ENCODE measurements at regions of chr22 and their contacts with region 1.

Region 1: DNA sequence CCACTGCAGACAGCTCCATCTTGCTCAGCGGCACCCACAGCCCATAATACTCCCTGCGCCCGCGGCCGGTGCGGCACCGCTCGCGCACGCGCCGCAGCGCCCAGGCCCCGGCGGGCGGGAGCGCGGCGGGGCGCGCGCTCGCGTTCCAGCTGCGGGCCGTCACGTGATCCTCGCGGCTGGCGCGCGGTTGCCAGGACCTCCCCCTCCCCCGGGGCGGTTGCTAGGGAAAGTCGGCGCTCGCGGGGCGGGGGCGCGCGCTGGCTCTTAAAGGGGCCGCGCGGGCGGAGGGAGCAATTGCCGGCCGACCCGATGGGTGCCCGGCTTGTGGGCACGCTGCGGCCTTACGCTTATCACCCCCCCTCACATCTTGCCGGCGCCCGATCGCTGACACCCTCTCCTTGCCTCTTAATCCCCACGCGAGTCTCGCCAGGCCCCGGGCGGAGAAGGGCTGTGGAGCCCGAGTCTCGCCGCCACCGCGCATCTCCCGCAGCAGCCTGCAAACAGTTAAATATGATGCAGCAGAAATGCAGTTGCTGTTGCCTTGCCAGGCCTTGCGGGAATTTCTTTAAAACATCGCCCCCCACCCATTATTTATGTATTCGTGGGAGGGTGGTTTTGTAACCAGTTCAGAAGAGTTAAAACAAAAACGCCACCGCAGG is at the start of gene CBX6:
- DNase-seq: peak; percentile 96
- H3K4me3 Mint-ChIP-seq: peak within 1 kb of the TSS; percentile 93
- H3K27ac Mint-ChIP-seq: peak within 1 kb of the TSS; percentile 91
- H3K4me1 Mint-ChIP-seq: peaks cover 53% of the 10 kb centered on the region
- H3K27me3 Mint-ChIP-seq: no peaks in the 10 kb centered on the region
- total RNA-seq, gene CBX6: 116 to 117 TPM

Region 2: GRCh38 chr22:38656256-38657044 is 215.9 kb before region 1 on chr22 and contains the starts of genes CBY1 and FAM227A:
- CTCF ChIA-PET with region 1: no interaction called
- POLR2A ChIA-PET with region 1: no interaction called
- intact Hi-C with region 1: loop called (anchors 1 kb)
- DNase-seq: peak; percentile 88
- H3K4me3 Mint-ChIP-seq: peak within 1 kb of the TSS; percentile 88
- H3K27ac Mint-ChIP-seq: peak within 1 kb of the TSS; percentile 96
- H3K4me1 Mint-ChIP-seq: peaks cover 15% of the 10 kb centered on the region
- H3K27me3 Mint-ChIP-seq: no peaks in the 10 kb centered on the region
- total RNA-seq, gene CBY1: 9.8 to 14.6 TPM
- total RNA-seq, gene FAM227A: 0.36 to 0.88 TPM

Region 3: GRCh38 chr22:38843201-38843715 is 29.0 kb before region 1 on chr22:
- CTCF ChIA-PET with region 1: interaction called, 36 read pairs
- POLR2A ChIA-PET with region 1: interaction called, 4 read pairs
- intact Hi-C with region 1: no loop called
- DNase-seq: peak; percentile 72
- H3K4me3 Mint-ChIP-seq: peak overlapping the region; percentile 37
- H3K27ac Mint-ChIP-seq: no peak overlapping the region
- H3K4me1 Mint-ChIP-seq: peaks cover 11% of the 10 kb centered on the region
- H3K27me3 Mint-ChIP-seq: peaks cover 15% of the 10 kb centered on the region

Region 4: DNA sequence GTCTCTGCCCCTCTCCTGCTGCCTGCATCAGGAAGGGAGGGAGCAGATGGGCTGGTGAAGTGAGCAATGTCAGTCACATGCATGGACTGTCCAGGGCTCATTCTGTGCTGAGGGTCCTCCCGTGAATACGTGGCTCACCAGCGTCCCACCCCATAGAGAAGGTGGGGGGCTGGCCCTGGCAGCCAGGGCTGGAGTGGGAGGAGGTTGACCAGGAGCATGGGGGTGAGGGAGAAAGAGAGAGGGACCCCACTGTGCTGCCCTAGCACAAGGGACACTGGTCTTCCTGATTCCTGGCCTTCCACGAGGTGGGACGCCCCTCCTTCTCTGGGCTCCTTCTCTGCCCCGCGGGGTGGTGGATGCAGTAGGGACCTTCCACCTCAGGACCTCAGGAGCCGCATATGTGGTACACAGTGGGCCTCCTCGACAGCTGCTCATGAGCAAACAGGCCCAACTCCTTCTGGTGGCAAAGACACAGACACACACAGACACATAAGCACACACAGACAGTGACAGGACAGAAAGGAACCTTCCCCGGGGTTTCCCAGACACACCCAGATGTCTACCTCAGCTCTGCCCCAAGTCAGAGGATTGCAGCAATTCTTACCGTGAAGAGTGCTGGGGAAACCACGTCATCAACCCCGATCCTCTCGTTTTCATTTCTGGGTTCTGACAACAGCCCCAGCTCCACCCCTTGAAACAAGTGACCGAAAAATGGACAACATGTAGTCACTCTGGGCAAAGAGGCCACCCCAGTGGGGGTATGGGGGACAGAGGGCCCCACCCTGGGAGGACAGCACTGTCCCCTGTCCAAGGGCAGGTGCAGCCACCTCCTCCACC is 81.5 kb after region 1 on chr22:
- CTCF ChIA-PET with region 1: interaction called, 45 read pairs
- POLR2A ChIA-PET with region 1: interaction called, 13 read pairs
- intact Hi-C with region 1: loop called (anchors 1 kb)
- DNase-seq: peak; percentile 93
- H3K4me3 Mint-ChIP-seq: peak overlapping the region; percentile 50
- H3K27ac Mint-ChIP-seq: peak overlapping the region; percentile 87
- H3K4me1 Mint-ChIP-seq: peaks cover 31% of the 10 kb centered on the region
- H3K27me3 Mint-ChIP-seq: peaks cover 2% of the 10 kb centered on the region

Region 5: GRCh38 chr22:39013942-39014722 is 141.8 kb after region 1 on chr22 and contains the start of gene APOBEC3C:
- CTCF ChIA-PET with region 1: interaction called, 10 read pairs
- POLR2A ChIA-PET with region 1: no interaction called
- intact Hi-C with region 1: no loop called
- DNase-seq: peak; percentile 92
- H3K4me3 Mint-ChIP-seq: peak within 1 kb of the TSS; percentile 97
- H3K27ac Mint-ChIP-seq: peak within 1 kb of the TSS; percentile 96
- H3K4me1 Mint-ChIP-seq: peaks cover 48% of the 10 kb centered on the region
- H3K27me3 Mint-ChIP-seq: no peaks in the 10 kb centered on the region
- total RNA-seq, gene APOBEC3C: 141 to 142 TPM

Region 6: GRCh38 chr22:39152511-39153219 is 280.4 kb after region 1 on chr22 and contains the start of gene CBX7:
- CTCF ChIA-PET with region 1: interaction called, 16 read pairs
- POLR2A ChIA-PET with region 1: interaction called, 4 read pairs
- intact Hi-C with region 1: no loop called
- DNase-seq: peak; percentile 97
- H3K4me3 Mint-ChIP-seq: peak within 1 kb of the TSS; percentile 80
- H3K27ac Mint-ChIP-seq: peak within 1 kb of the TSS; percentile 71
- H3K4me1 Mint-ChIP-seq: peaks cover 42% of the 10 kb centered on the region
- H3K27me3 Mint-ChIP-seq: peaks cover 13% of the 10 kb centered on the region
- total RNA-seq, gene CBX7: 35.7 to 37.7 TPM

Measured in activated CD4-positive, alpha-beta memory T cell treated with anti-CD3 and anti-CD28 coated beads for 36 hours (primary cell).